Mammary epithelial cell (primary cell): ENCODE measurements at regions of chr6 and their contacts with region 1.

Region 1: GRCh38 chr6:153957394-153957793 is 81.6 kb upstream of the OPRM1 start:
- DNase-seq: no peak
- H3K4me3 ChIP-seq: no peak overlapping the region
- H3K27ac ChIP-seq: no peak overlapping the region
- H3K4me1 ChIP-seq: peaks cover 8% of the 10 kb centered on the region
- H3K27me3 ChIP-seq: no peaks in the 10 kb centered on the region
- CTCF ChIP-seq: no peak

Region 2: GRCh38 chr6:154112181-154112809 is 154.9 kb after region 1 on chr6:
- CTCF ChIA-PET with region 1: no interaction called
- dilution Hi-C with region 1: no loop called
- in situ Hi-C with region 1: no loop called
- intact Hi-C with region 1: loop called (anchors 10 kb)
- DNase-seq: peak; percentile 94
- H3K4me3 ChIP-seq: no peak overlapping the region
- H3K27ac ChIP-seq: peak overlapping the region; percentile 12
- H3K4me1 ChIP-seq: peaks cover 31% of the 10 kb centered on the region
- H3K27me3 ChIP-seq: no peaks in the 10 kb centered on the region
- CTCF ChIP-seq: no peak